Activated B cell treated with CpG ODN at 0.5 μM for 24 hours (primary cell): ENCODE measurements at regions of chr7 and their contacts with region 1.

Region 1: GRCh38 chr7:87886875-87887274 is 10.6 kb downstream of the DBF4 start:
- DNase-seq: no peak
- ATAC-seq: no peak
- H3K4me3 Mint-ChIP-seq: no peak overlapping the region
- H3K27ac Mint-ChIP-seq: no peak overlapping the region
- H3K4me1 Mint-ChIP-seq: no peaks in the 10 kb centered on the region
- H3K27me3 Mint-ChIP-seq: no peaks in the 10 kb centered on the region
- CTCF ChIP-seq: no peak

Region 2: GRCh38 chr7:87312215-87312865 is 574.5 kb before region 1 on chr7:
- CTCF ChIA-PET with region 1: interaction called, 6 read pairs
- POLR2A ChIA-PET with region 1: no interaction called
- intact Hi-C with region 1: loop called (anchors 1 kb)
- DNase-seq: no peak
- ATAC-seq: peak; percentile 89
- H3K4me3 Mint-ChIP-seq: no peak overlapping the region
- H3K27ac Mint-ChIP-seq: no peak overlapping the region
- H3K4me1 Mint-ChIP-seq: no peaks in the 10 kb centered on the region
- H3K27me3 Mint-ChIP-seq: peaks cover 2% of the 10 kb centered on the region
- CTCF ChIP-seq: peak; percentile 99

Region 3: GRCh38 chr7:87506246-87507180 is 380.4 kb before region 1 on chr7:
- CTCF ChIA-PET with region 1: interaction called, 11 read pairs
- POLR2A ChIA-PET with region 1: no interaction called
- intact Hi-C with region 1: loop called (anchors 1 kb)
- DNase-seq: no peak
- ATAC-seq: no peak
- H3K4me3 Mint-ChIP-seq: no peak overlapping the region
- H3K27ac Mint-ChIP-seq: peak overlapping the region; percentile 30
- H3K4me1 Mint-ChIP-seq: peaks cover 29% of the 10 kb centered on the region
- H3K27me3 Mint-ChIP-seq: no peaks in the 10 kb centered on the region
- CTCF ChIP-seq: no peak

Region 4: DNA sequence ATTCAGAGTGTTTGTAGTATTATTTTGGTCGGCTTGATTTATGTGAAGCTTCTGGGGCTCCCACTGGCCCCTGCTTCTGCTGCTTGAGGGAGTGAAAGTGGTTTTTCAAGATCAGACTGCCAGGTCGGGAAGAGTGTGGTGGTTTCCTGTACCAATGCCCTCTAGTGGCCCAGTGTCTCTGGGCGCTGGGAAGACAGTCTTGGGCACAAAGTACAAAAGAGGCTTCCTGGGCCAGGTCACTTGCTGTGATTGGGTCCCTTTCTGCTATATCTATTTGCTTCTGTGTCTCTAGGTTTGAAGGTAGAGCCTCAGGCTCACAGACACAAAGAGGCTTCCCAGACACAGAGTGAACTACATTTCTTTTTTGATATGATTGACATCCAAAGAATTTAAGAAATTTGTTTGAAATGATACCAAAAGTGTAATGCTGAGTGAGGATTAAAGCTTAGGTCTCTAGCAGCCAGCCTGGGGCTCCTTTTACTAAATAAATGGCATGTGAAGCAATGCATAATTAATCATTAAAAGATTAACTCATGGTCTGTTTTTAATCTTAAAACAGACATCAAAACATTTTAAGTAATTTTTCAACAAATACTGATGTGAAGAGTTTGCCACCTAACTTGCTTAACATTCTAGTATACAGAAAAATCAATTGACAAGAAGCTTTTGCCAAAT is 322.4 kb before region 1 on chr7:
- CTCF ChIA-PET with region 1: no interaction called
- POLR2A ChIA-PET with region 1: no interaction called
- intact Hi-C with region 1: loop called (anchors 10 kb)
- DNase-seq: no peak
- ATAC-seq: peak; percentile 72
- H3K4me3 Mint-ChIP-seq: no peak overlapping the region
- H3K27ac Mint-ChIP-seq: no peak overlapping the region
- H3K4me1 Mint-ChIP-seq: peaks cover 5% of the 10 kb centered on the region
- H3K27me3 Mint-ChIP-seq: no peaks in the 10 kb centered on the region
- CTCF ChIP-seq: no peak

Region 5: DNA sequence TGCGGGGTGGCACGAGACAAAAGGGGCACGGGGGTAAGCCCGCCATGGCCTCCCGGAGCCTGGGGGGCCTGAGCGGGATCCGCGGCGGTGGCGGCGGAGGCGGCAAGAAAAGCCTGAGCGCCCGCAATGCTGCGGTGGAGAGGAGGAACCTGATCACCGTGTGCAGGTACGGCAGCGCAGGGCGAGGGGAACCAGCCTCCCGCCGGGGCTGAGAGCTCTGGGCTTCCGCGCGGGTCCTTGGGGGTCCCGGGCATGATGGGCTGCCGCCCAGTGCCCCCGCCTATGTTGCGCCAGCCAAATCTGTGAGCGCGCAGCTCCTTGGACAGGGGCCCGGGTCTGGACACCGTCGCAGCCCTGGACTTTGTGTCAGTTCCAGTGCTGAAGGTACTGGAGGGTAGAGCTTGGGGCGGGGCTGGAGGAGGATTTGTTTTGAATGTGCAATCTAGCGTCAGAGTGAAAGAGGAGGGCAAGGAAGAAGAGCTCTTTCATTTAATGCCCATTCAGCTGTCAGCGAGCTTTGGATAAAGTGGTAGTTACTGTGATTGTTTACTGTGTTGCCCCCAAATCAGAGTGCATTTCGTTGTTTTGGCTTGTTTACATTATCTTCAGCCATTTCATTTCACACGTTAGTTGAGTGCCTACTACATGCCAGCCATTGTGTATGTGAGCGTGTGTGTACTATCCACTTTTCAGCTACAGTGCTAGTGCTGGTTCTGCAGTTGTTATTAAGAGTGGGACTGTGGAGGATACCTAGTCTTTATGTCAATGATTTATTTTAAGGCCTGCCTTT is 257.9 kb before region 1 on chr7:
- CTCF ChIA-PET with region 1: no interaction called
- POLR2A ChIA-PET with region 1: no interaction called
- intact Hi-C with region 1: no loop called
- DNase-seq: peak; percentile 44
- ATAC-seq: peak; percentile 18
- H3K4me3 Mint-ChIP-seq: peak overlapping the region; percentile 83
- H3K27ac Mint-ChIP-seq: no peak overlapping the region
- H3K4me1 Mint-ChIP-seq: peaks cover 11% of the 10 kb centered on the region
- H3K27me3 Mint-ChIP-seq: peaks cover 8% of the 10 kb centered on the region
- CTCF ChIP-seq: no peak

Region 6: GRCh38 chr7:87747681-87748080 is 139.2 kb before region 1 on chr7:
- CTCF ChIA-PET with region 1: interaction called, 14 read pairs
- POLR2A ChIA-PET with region 1: no interaction called
- intact Hi-C with region 1: loop called (anchors 1 kb)
- DNase-seq: no peak
- ATAC-seq: no peak
- H3K4me3 Mint-ChIP-seq: no peak overlapping the region
- H3K27ac Mint-ChIP-seq: no peak overlapping the region
- H3K4me1 Mint-ChIP-seq: no peaks in the 10 kb centered on the region
- H3K27me3 Mint-ChIP-seq: no peaks in the 10 kb centered on the region
- CTCF ChIP-seq: no peak

Region 7: GRCh38 chr7:87797798-87798403 is 89.0 kb before region 1 on chr7:
- CTCF ChIA-PET with region 1: interaction called, 42 read pairs
- POLR2A ChIA-PET with region 1: no interaction called
- intact Hi-C with region 1: loop called (anchors 1 kb)
- DNase-seq: no peak
- ATAC-seq: peak; percentile 40
- H3K4me3 Mint-ChIP-seq: no peak overlapping the region
- H3K27ac Mint-ChIP-seq: no peak overlapping the region
- H3K4me1 Mint-ChIP-seq: no peaks in the 10 kb centered on the region
- H3K27me3 Mint-ChIP-seq: peaks cover under 1% of the 10 kb centered on the region
- CTCF ChIP-seq: no peak

Region 8: GRCh38 chr7:88111136-88111743 is 224.4 kb after region 1 on chr7:
- CTCF ChIA-PET with region 1: no interaction called
- POLR2A ChIA-PET with region 1: no interaction called
- intact Hi-C with region 1: loop called (anchors 2 kb)
- DNase-seq: no peak
- ATAC-seq: no peak
- H3K4me3 Mint-ChIP-seq: no peak overlapping the region
- H3K27ac Mint-ChIP-seq: no peak overlapping the region
- H3K4me1 Mint-ChIP-seq: no peaks in the 10 kb centered on the region
- H3K27me3 Mint-ChIP-seq: no peaks in the 10 kb centered on the region
- CTCF ChIP-seq: no peak